ENCODE measurements at regions of chr13 and their contacts with region 1.

Region 1: DNA sequence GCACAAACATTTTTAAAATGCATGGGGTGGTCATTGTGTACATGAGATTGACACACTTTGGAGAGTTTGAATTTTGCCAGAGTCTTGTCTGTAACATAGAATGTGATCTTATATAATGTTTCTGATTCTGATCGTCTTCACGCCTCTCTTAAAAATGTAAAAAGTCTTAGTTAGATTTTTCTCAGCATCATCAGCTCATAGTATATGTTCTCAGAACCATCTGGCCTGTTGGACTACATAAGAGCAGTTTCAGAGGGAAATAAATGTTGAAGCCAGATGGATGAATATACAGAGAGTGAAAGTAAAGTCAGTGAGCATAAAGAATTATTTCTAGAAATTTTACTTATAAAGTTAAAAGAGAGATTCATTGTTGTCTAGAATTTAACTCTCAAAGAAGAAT is 789.9 kb upstream of the MIR17HG start:
- DNase-seq: no peak
- ATAC-seq: no peak
- H3K4me3 ChIP-seq: no peak overlapping the region
- H3K27ac ChIP-seq: no peak overlapping the region
- H3K4me1 ChIP-seq: no peaks in the 10 kb centered on the region
- H3K27me3 ChIP-seq: no peaks in the 10 kb centered on the region
- CTCF ChIP-seq: no peak
- POLR2A ChIP-seq: no peak
- RAD21 ChIP-seq: no peak

Region 2: DNA sequence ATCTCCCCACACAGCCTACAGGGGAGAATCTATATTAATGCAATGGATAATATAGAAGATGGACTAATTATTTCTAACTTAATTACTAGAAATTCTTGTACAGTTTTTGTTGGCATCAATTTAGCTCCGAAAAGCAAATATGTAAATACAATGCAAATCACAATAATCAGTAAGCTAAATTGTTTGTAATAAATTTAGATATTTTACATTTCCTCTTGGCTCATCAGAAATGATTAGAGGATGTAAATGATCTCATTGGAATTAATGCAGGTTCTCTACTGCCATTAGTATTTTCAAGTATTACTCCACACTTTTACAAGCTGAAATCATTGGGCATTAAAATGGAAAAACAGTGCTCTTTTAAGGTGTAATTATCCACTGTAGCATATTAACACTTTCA is 48.0 kb after region 1 on chr13:
- CTCF ChIA-PET with region 1: no interaction called
- POLR2A ChIA-PET with region 1: no interaction called
- RAD21 ChIA-PET with region 1: no interaction called
- intact Hi-C with region 1: loop called (anchors 5 kb)
- DNase-seq: no peak
- ATAC-seq: no peak
- H3K4me3 ChIP-seq: no peak overlapping the region
- H3K27ac ChIP-seq: no peak overlapping the region
- H3K4me1 ChIP-seq: no peaks in the 10 kb centered on the region
- H3K27me3 ChIP-seq: no peaks in the 10 kb centered on the region
- CTCF ChIP-seq: no peak
- POLR2A ChIP-seq: no peak
- RAD21 ChIP-seq: no peak

Measured in HCT116 (cell line).